ENCODE measurements at regions of chr4 and their contacts with region 1.

Region 1: GRCh38 chr4:121360495-121360894 is 20.3 kb downstream of the QRFPR start:
- DNase-seq: no peak
- H3K4me3 ChIP-seq: no peak overlapping the region
- H3K27ac ChIP-seq: no peak overlapping the region
- H3K4me1 ChIP-seq: no peaks in the 10 kb centered on the region
- H3K27me3 ChIP-seq: no peaks in the 10 kb centered on the region
- CTCF ChIP-seq: no peak
- POLR2A ChIP-seq: no peak

Region 2: GRCh38 chr4:121923306-121923705 is 562.8 kb after region 1 on chr4:
- intact Hi-C with region 1: loop called (anchors 5 kb)
- DNase-seq: no peak
- H3K4me3 ChIP-seq: no peak overlapping the region
- H3K27ac ChIP-seq: no peak overlapping the region
- H3K4me1 ChIP-seq: no peaks in the 10 kb centered on the region
- H3K27me3 ChIP-seq: no peaks in the 10 kb centered on the region
- CTCF ChIP-seq: no peak
- POLR2A ChIP-seq: no peak

Region 3: DNA sequence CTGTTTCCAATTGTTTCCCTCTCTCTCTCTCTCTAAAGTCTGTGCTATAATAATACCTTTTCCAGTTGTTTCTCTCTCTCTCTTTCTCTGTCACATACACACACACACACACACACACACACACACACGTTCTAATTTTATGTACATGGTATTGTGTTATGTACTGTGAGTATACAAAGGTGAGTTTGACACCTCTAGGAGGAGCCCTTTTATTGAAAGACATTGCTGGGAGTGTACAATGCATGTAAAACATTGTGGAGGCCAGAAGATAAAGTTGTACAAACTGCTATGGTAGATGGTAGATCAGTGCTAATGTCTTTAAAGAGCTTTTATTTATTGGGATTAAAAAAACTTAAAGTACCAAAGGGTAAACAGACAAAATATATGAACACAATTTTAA is 845.2 kb after region 1 on chr4:
- intact Hi-C with region 1: no loop called
- DNase-seq: no peak
- H3K4me3 ChIP-seq: no peak overlapping the region
- H3K27ac ChIP-seq: no peak overlapping the region
- H3K4me1 ChIP-seq: no peaks in the 10 kb centered on the region
- H3K27me3 ChIP-seq: no peaks in the 10 kb centered on the region
- CTCF ChIP-seq: no peak
- POLR2A ChIP-seq: no peak

Measured in breast epithelium (tissue), 4 donors.